Left ventricle myocardium superior (tissue), 1 donor: ENCODE measurements at regions of chr1 and their contacts with region 1.

Region 1: DNA sequence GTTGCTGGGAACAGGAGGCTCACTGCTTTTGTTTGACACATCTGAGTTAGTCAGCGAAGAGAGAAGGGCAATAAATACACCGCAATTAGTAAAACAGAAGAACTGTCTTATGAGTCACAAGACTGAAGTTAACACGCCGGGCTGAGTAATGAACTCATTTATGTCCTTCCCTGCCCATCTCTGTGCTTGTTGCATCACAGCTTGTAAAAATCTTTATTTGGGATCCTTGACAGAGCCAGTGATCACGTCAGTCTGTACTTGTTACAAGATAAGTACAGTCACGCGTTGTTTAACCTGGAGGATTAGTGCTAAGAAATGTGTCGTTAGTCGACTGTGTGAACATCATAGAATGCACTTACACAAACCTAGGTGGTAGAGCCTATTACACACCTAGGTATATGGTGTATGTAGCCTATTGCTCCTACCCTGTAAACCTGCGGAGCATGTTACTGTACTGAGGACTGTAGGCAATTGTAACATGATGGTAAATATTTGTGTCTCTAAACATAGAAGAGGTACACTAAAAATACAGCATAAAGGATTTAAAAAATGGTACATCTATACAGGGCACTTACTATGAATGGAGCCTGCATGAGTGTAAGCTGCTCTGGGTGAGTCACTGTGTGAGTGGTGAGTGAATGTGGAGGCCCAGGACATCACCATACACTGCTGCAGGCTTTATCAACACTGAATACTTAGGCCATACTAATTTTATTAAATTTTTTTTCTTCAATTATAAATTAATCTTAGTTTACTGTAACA is 272.2 kb downstream of the TNR start:
- DNase-seq: no peak
- ATAC-seq: peak; percentile 28

Region 2: GRCh38 chr1:175887981-175888433 is 416.8 kb after region 1 on chr1:
- intact Hi-C with region 1: loop called (anchors 10 kb)
- DNase-seq: peak; percentile 64
- ATAC-seq: peak; percentile 93

Region 3: GRCh38 chr1:176066709-176067108 is 595.5 kb after region 1 on chr1:
- intact Hi-C with region 1: loop called (anchors 10 kb)
- DNase-seq: no peak
- ATAC-seq: no peak